ENCODE measurements at regions of chr7 and their contacts with region 1.

Region 1: DNA sequence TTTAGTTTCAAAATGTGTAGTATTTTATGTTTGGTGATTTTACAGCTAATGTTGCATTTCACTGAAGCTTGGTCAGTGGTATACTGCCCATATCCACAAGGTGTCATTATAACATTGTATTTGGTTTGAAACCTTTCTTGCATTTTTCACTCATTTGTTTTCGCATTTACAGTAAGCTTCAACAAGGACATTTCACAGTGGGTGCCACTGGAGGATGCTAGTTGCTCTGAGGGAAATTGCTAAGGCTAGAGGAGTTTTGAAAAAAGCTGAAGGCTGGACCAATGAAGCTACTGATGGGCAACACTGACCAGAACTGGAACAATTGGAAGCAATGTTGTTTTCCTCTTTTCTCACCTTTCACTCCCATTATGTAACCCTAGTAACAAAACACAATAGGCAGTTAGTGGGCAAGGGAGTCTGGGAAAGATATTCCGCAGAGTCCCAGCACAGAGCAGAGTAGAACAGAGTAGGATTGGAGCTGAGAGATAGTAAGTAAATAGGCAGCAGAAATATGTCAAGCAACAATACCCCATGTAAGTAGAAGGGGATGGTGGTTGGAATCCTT is 23.6 kb upstream of the SRI start:
- DNase-seq: peak in 1 of 2 donors; percentile 22
- ATAC-seq: peak; percentile 30 to 85 (median 80)
- H3K4me3 ChIP-seq: no peak overlapping the region
- H3K27ac ChIP-seq: no peak overlapping the region
- H3K4me1 ChIP-seq: peaks cover 0 to 5% (median 2%) of the 10 kb centered on the region in 9 donors
- H3K27me3 ChIP-seq: no peaks in the 10 kb centered on the region
- CTCF ChIP-seq: peak; percentile 60 to 87 (median 80)

Region 2: GRCh38 chr7:88200789-88201188 is 42.6 kb before region 1 on chr7:
- intact Hi-C with region 1: no loop called
- DNase-seq: no peak
- ATAC-seq: no peak
- H3K4me3 ChIP-seq: no peak overlapping the region
- H3K27ac ChIP-seq: no peak overlapping the region
- H3K4me1 ChIP-seq: no peaks in the 10 kb centered on the region
- H3K27me3 ChIP-seq: no peaks in the 10 kb centered on the region
- CTCF ChIP-seq: no peak

Region 3: GRCh38 chr7:88357781-88358525 is 114.5 kb after region 1 on chr7:
- intact Hi-C with region 1: loop called (anchors 1 to 5 kb)
- DNase-seq: no peak
- ATAC-seq: peak in 6 of 8 donors; percentile 79 to 88 (median 83)
- H3K4me3 ChIP-seq: peak overlapping the region in 7 of 10 donors; percentile 11 to 36 (median 22)
- H3K27ac ChIP-seq: no peak overlapping the region
- H3K4me1 ChIP-seq: peaks cover 0 to 32% (median 0%) of the 10 kb centered on the region in 9 donors
- H3K27me3 ChIP-seq: no peaks in the 10 kb centered on the region
- CTCF ChIP-seq: peak; percentile 22 to 78 (median 65)